Mammary epithelial cell (primary cell): ENCODE measurements at regions of chr9 and their contacts with region 1.

Region 1: DNA sequence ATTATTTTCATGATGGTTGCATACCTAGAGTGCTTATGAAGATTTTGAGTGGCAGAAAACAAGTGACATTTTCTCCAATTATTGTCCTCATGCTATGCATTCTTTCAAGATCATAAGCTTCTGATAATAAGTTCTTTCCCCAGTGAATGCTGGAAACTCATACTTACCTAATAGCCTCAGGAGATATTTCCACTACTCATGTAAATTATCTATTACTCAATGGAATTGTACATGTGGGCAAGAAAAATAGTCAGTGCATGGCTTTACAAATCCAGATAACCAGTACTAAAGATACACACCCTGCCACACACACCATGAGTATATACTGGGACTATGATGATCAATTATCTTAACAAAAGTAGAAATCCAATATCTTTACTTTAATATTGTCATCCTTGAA is 1219.5 kb upstream of the C9orf72 start:
- DNase-seq: peak; percentile 39
- H3K4me3 ChIP-seq: no peak overlapping the region
- H3K27ac ChIP-seq: no peak overlapping the region
- H3K4me1 ChIP-seq: no peaks in the 10 kb centered on the region
- H3K27me3 ChIP-seq: no peaks in the 10 kb centered on the region
- CTCF ChIP-seq: no peak

Region 2: GRCh38 chr9:29751226-29751625 is 958.5 kb after region 1 on chr9:
- CTCF ChIA-PET with region 1: interaction called, 10 read pairs
- dilution Hi-C with region 1: no loop called
- in situ Hi-C with region 1: no loop called
- intact Hi-C with region 1: no loop called
- DNase-seq: no peak
- H3K4me3 ChIP-seq: no peak overlapping the region
- H3K27ac ChIP-seq: no peak overlapping the region
- H3K4me1 ChIP-seq: no peaks in the 10 kb centered on the region
- H3K27me3 ChIP-seq: peaks cover 2% of the 10 kb centered on the region
- CTCF ChIP-seq: no peak